BJ (cell line): ENCODE measurements at regions of chr5 and their contacts with region 1.

Region 1: GRCh38 chr5:54944364-54944763 is 41.0 kb downstream of the ESM1 start:
- DNase-seq: no peak
- H3K4me3 ChIP-seq: no peak overlapping the region
- H3K27me3 ChIP-seq: no peaks in the 10 kb centered on the region
- CTCF ChIP-seq: peak; percentile 80

Region 2: GRCh38 chr5:54930736-54931135 is 13.6 kb before region 1 on chr5:
- CTCF ChIA-PET with region 1: interaction called, 21 read pairs
- POLR2A ChIA-PET with region 1: no interaction called
- DNase-seq: no peak
- H3K4me3 ChIP-seq: no peak overlapping the region
- H3K27me3 ChIP-seq: peaks cover 19% of the 10 kb centered on the region
- CTCF ChIP-seq: no peak

Region 3: DNA sequence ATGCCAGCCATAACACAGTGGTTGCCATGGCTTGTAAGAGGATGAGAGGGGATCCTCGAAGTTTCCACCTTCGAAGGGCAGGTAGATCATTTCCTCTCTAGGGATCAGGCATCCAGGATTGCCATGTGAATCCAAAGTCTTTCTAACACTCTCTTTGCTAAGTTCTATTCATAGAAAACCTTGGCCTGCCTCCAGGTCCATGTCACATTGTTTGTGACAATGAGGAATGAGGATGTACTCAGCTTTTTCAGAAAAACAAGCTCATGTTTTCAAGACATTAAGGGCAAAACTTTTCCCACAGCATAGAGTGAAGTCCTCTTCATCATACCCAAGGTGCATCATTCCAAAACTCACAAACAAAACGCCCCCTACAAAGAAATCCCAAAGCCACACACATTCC is 21.4 kb after region 1 on chr5:
- CTCF ChIA-PET with region 1: interaction called, 51 read pairs
- POLR2A ChIA-PET with region 1: no interaction called
- DNase-seq: no peak
- H3K4me3 ChIP-seq: no peak overlapping the region
- H3K27me3 ChIP-seq: no peaks in the 10 kb centered on the region
- CTCF ChIP-seq: no peak

Region 4: GRCh38 chr5:55146543-55147151 is 202.3 kb after region 1 on chr5:
- CTCF ChIA-PET with region 1: interaction called, 95 read pairs
- POLR2A ChIA-PET with region 1: no interaction called
- DNase-seq: peak; percentile 35
- H3K4me3 ChIP-seq: no peak overlapping the region
- H3K27me3 ChIP-seq: no peaks in the 10 kb centered on the region
- CTCF ChIP-seq: peak; percentile 91

Region 5: DNA sequence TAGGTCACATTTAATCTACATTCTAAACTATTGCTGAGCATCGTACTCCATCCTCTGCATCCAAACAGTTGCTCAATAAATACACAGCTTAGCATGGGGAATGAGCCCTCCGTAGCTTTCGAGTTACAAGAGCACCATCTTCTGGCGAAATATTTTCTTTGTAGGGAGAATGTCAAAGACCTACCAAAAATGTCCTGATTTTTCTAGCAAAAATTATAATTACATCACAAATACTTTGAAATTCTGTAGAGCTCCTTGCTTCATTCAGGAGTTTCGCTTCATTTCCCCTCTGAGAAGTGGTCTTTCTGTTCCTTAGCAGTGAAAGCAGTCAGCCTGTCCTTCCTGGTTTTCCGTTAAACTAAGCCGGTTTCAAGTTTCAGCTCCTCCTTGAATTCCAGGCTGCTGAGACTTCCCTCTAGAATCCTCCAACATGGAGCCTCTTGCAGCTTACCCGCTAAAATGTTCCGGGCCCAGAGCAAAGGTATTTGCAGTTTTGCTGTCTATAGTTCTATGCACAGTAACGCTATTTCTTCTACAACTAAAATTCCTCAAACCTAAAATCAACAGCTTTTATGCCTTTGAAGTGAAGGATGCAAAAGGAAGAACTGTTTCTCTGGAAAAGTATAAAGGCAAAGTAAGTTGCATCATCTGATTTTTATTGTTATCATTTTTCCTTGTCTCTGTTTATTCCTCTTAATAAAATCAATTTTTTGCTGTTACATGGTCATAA is 215.6 kb after region 1 on chr5 and contains the start of gene GPX8:
- CTCF ChIA-PET with region 1: interaction called, 45 read pairs
- POLR2A ChIA-PET with region 1: interaction called, 4 read pairs
- DNase-seq: peak; percentile 59
- H3K4me3 ChIP-seq: peak within 1 kb of the TSS; percentile 67
- H3K27me3 ChIP-seq: no peaks in the 10 kb centered on the region
- CTCF ChIP-seq: peak; percentile 57
- polyA plus RNA-seq, gene GPX8: 115 and 271 TPM in 2 replicates

Region 6: DNA sequence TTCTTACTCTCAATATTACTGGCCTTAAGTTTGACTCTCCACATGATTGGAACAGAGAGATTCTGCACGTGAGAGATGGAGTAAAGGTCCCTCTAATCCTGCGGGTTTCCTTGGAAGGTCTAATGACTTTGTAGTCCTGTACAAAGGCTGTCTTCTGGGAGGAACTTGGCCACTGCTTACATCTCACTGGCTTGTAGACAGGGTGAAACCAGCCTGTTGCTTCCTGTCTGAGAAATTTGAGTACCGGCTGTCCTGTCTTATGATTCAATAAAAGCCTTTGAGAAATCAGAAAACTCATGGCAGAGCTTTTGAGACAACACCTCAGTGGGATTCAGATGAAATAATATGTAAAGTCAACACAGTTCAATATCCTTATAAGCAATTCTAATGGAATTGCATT is 949.8 kb after region 1 on chr5:
- CTCF ChIA-PET with region 1: no interaction called
- POLR2A ChIA-PET with region 1: no interaction called
- DNase-seq: no peak
- H3K4me3 ChIP-seq: no peak overlapping the region
- H3K27me3 ChIP-seq: no peaks in the 10 kb centered on the region
- CTCF ChIP-seq: no peak